ENCODE measurements at regions of chr17 and their contacts with region 1.

Region 1: DNA sequence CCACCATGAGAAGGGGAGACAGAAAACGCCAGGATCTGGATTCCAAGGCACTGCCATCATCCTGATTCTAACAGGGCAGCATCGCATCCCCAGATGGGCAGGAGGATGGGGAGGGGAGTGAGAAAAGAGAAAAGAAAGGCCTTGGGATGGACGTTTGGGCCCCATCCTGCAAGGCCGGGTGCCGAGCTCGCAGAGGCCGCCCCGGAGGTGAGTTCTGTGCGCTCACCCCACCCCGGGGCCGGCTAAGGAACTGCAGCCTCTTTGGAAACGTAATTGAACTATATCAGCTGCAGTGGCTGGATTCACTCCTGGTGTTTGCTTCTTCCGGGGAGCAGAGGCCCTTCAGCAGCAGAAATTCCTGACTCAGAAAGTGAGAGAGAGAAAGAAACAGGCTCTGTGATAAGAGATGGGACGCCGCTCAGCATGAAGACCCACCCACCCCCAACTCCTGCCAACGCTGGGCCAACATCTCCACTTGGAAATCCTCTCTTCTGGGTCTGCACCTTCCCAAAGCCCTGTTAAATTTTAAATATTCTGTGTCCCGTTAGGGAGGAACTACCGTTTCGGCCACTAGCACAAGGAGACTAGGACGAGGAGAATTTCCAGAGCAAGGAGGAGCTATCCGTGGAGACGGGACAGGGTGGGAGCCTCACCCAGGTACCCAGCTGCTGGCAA is 8.5 kb upstream of the SSTR2 start:
- DNase-seq: peak; percentile 89
- H3K4me3 ChIP-seq: no peak overlapping the region
- H3K27ac ChIP-seq: peak overlapping the region in 2 of 8 donors; percentile 8 to 40
- H3K4me1 ChIP-seq: peaks cover 3 to 25% (median 8%) of the 10 kb centered on the region in 6 donors
- H3K27me3 ChIP-seq: peaks cover 0 to 28% (median 0%) of the 10 kb centered on the region in 7 donors
- CTCF ChIP-seq: peak; percentile 56 to 82 (median 67)
- POLR2A ChIP-seq: no peak

Region 2: GRCh38 chr17:72985881-72986720 is 170.2 kb before region 1 on chr17:
- intact Hi-C with region 1: loop called (anchors 10 kb)
- DNase-seq: peak; percentile 80
- H3K4me3 ChIP-seq: no peak overlapping the region
- H3K27ac ChIP-seq: peak overlapping the region in 1 of 8 donors; percentile 4
- H3K4me1 ChIP-seq: peaks cover 0 to 15% (median 5%) of the 10 kb centered on the region in 6 donors
- H3K27me3 ChIP-seq: no peaks in the 10 kb centered on the region
- CTCF ChIP-seq: peak; percentile 40 to 89 (median 74)
- POLR2A ChIP-seq: no peak